MCF 10A (cell line): ENCODE measurements at regions of chr2 and their contacts with region 1.

Region 1: GRCh38 chr2:223760838-223761502 is 76.4 kb downstream of the AP1S3 start:
- DNase-seq: peak; percentile 98
- H3K4me3 Mint-ChIP-seq: no peak overlapping the region
- H3K27ac Mint-ChIP-seq: peak overlapping the region; percentile 94
- H3K4me1 Mint-ChIP-seq: peaks cover 27% of the 10 kb centered on the region
- H3K27me3 Mint-ChIP-seq: no peaks in the 10 kb centered on the region
- CTCF ChIP-seq: peak; percentile 24

Region 2: GRCh38 chr2:223494987-223495386 is 266.0 kb before region 1 on chr2:
- CTCF ChIA-PET with region 1: no interaction called
- POLR2A ChIA-PET with region 1: no interaction called
- intact Hi-C with region 1: no loop called
- DNase-seq: no peak
- H3K4me3 Mint-ChIP-seq: no peak overlapping the region
- H3K27ac Mint-ChIP-seq: no peak overlapping the region
- H3K4me1 Mint-ChIP-seq: no peaks in the 10 kb centered on the region
- H3K27me3 Mint-ChIP-seq: no peaks in the 10 kb centered on the region
- CTCF ChIP-seq: no peak

Region 3: DNA sequence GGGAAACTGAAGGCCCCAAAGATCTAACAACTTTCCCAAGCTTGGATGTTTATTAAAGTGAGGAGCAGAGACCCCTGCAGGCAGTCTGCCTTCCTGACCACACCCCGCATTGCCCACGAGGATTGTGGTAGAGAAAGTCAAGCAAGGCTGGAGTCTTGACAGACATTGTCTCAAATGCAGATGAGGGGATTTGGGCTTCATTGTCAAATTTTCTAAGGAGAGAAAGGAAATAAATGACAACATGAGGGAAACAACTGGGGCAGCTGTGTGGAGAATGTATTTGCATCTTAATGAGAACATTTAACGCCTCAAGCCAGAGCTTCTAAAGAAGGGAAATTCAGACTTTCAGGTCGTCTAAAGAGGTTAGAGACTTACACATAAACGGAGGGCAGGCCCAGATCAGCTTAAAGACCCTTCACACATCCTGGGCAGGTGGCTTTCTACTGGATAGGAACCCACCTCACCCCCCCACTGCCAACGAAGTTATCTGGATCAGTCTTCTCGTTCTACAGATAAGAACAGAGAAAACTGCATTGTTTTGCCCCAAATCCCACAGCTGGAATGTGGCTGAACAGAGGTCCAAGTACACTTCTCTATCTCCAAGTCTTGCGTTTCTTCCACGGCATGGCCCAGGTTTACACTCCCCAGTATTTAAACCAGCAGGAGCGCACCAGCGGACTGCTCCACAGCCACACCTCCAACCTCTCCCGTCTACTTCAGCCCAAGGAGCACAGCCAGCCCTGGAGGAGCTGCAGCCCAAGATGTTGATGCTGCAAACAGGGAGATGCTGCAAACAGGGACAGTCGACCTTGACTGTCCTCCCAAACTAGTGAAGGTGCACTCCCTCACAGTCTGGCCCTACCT is 142.6 kb before region 1 on chr2:
- CTCF ChIA-PET with region 1: no interaction called
- POLR2A ChIA-PET with region 1: no interaction called
- intact Hi-C with region 1: no loop called
- DNase-seq: no peak
- H3K4me3 Mint-ChIP-seq: no peak overlapping the region
- H3K27ac Mint-ChIP-seq: no peak overlapping the region
- H3K4me1 Mint-ChIP-seq: no peaks in the 10 kb centered on the region
- H3K27me3 Mint-ChIP-seq: no peaks in the 10 kb centered on the region
- CTCF ChIP-seq: no peak

Region 4: GRCh38 chr2:223674998-223675609 is 85.9 kb before region 1 on chr2:
- CTCF ChIA-PET with region 1: no interaction called
- POLR2A ChIA-PET with region 1: interaction called, 3 read pairs
- intact Hi-C with region 1: loop called (anchors 2 kb)
- DNase-seq: peak; percentile 71
- H3K4me3 Mint-ChIP-seq: no peak overlapping the region
- H3K27ac Mint-ChIP-seq: peak overlapping the region; percentile 42
- H3K4me1 Mint-ChIP-seq: peaks cover 9% of the 10 kb centered on the region
- H3K27me3 Mint-ChIP-seq: no peaks in the 10 kb centered on the region
- CTCF ChIP-seq: peak; percentile 77

Region 5: DNA sequence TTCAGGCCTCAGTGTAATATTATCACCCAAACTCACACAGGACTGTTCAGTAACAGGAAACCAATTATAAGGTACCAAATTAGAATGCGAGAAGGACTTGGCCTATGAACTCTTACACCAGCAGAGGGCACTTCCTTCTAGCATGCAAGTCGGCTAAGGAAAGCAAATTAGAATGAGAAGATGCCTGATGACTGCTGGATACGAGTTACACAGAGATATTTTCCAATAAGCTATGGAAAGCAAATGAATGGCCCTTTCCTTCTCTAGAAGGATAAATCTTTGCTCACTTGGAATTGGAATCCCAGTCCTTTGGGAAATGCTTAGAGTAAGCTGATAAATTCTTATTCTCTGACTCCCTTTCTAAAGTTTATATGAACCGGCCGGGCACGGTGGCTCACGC is 33.4 kb before region 1 on chr2:
- CTCF ChIA-PET with region 1: interaction called, 27 read pairs
- POLR2A ChIA-PET with region 1: interaction called, 46 read pairs
- intact Hi-C with region 1: loop called (anchors 1 kb)
- DNase-seq: peak; percentile 80
- H3K4me3 Mint-ChIP-seq: no peak overlapping the region
- H3K27ac Mint-ChIP-seq: no peak overlapping the region
- H3K4me1 Mint-ChIP-seq: peaks cover 24% of the 10 kb centered on the region
- H3K27me3 Mint-ChIP-seq: no peaks in the 10 kb centered on the region
- CTCF ChIP-seq: peak; percentile 42

Region 6: DNA sequence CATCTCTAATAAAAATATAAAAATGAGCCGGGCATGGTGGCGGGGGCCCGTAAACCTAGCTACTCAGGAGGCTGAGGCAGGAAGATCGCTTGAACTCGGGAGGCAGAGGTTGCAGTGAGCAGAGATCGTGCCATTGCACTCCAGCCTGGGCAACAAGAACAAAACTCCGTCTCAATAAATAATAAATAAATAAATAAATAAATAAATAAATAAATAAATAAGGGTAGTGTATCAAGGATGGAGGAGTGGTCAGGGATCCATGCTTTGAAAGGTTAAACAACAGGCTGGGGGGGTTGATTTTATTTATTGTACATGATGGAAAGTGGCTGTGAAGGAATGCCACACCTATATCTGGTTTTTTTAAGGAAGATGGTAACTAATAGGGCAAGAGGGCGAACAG is 13.2 kb after region 1 on chr2:
- CTCF ChIA-PET with region 1: interaction called, 16 read pairs
- POLR2A ChIA-PET with region 1: interaction called, 8 read pairs
- intact Hi-C with region 1: no loop called
- DNase-seq: no peak
- H3K4me3 Mint-ChIP-seq: no peak overlapping the region
- H3K27ac Mint-ChIP-seq: no peak overlapping the region
- H3K4me1 Mint-ChIP-seq: no peaks in the 10 kb centered on the region
- H3K27me3 Mint-ChIP-seq: no peaks in the 10 kb centered on the region
- CTCF ChIP-seq: no peak

Region 7: GRCh38 chr2:223854741-223855140 is 93.8 kb after region 1 on chr2:
- CTCF ChIA-PET with region 1: interaction called, 5 read pairs
- POLR2A ChIA-PET with region 1: interaction called, 3 read pairs
- intact Hi-C with region 1: loop called (anchors 1 kb)
- DNase-seq: no peak
- H3K4me3 Mint-ChIP-seq: no peak overlapping the region
- H3K27ac Mint-ChIP-seq: no peak overlapping the region
- H3K4me1 Mint-ChIP-seq: peaks cover 6% of the 10 kb centered on the region
- H3K27me3 Mint-ChIP-seq: no peaks in the 10 kb centered on the region
- CTCF ChIP-seq: no peak